GM13976 (cell line): ENCODE measurements at regions of chr20 and their contacts with region 1.

Region 1: DNA sequence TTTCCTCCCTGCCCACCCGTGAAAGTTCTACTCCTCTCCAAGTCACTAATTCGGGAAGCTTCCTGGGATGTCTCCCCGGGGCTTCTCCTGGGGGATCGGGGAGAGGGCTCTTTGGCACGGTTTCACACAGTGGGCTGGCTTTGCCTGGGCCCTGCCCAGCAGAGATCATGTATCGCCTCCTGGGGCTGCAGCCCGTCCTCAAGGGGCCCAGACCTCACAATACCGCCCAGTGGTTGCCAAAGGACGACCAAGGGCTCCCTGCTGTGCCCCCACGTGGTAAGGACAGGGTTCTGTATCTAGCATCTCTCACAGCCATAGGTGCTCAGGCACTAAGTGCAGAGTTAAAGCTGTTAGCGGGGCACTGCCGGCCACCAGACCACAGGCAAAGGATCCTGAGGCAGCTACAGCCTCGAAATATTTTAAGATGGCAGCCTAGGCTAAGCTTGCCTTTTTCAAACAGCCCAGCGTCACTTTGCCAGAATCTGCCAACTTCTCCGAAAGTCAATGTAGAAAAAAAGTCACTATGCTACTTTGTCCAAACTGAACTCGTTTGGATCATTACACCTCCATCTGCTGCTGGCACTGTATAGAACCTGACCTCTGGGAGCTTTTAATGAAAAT is 1.4 kb upstream of the NNAT start:
- DNase-seq: peak; percentile 33
- CTCF ChIP-seq: no peak

Region 2: GRCh38 chr20:37406010-37406998 is 113.3 kb before region 1 on chr20:
- in situ Hi-C with region 1: loop called (anchors 10 kb)
- DNase-seq: peak; percentile 89
- CTCF ChIP-seq: no peak